Panc1 (cell line): ENCODE measurements at regions of chr9 and their contacts with region 1.

Region 1: GRCh38 chr9:81689343-81690190 is at the start of gene TLE1:
- DNase-seq: peak; percentile 93
- ATAC-seq: peak; percentile 94
- H3K4me3 ChIP-seq: peak within 1 kb of the TSS; percentile 60 to 77
- H3K27ac ChIP-seq: peak within 1 kb of the TSS; percentile 61; the same call in 1 of the 2 replicates
- H3K4me1 ChIP-seq: peaks cover 16% of the 10 kb centered on the region; the same call in 1 of the 2 replicates
- H3K27me3 ChIP-seq: no peaks in the 10 kb centered on the region
- CTCF ChIP-seq: no peak
- total RNA-seq, gene TLE1: 12.9 TPM

Region 2: GRCh38 chr9:81521892-81522291 is 167.7 kb before region 1 on chr9:
- CTCF ChIA-PET with region 1: no interaction called
- POLR2A ChIA-PET with region 1: no interaction called
- in situ Hi-C with region 1: no loop called
- intact Hi-C with region 1: loop called (anchors 5 kb)
- DNase-seq: no peak
- ATAC-seq: no peak
- H3K4me3 ChIP-seq: no peak overlapping the region
- H3K27ac ChIP-seq: no peak overlapping the region
- H3K4me1 ChIP-seq: no peaks in the 10 kb centered on the region
- H3K27me3 ChIP-seq: no peaks in the 10 kb centered on the region
- CTCF ChIP-seq: no peak

Region 3: GRCh38 chr9:81609782-81610739 is 79.5 kb before region 1 on chr9:
- CTCF ChIA-PET with region 1: no interaction called
- POLR2A ChIA-PET with region 1: no interaction called
- in situ Hi-C with region 1: no loop called
- intact Hi-C with region 1: no loop called
- DNase-seq: no peak
- ATAC-seq: no peak
- H3K4me3 ChIP-seq: no peak overlapping the region
- H3K27ac ChIP-seq: no peak overlapping the region
- H3K4me1 ChIP-seq: no peaks in the 10 kb centered on the region
- H3K27me3 ChIP-seq: no peaks in the 10 kb centered on the region
- CTCF ChIP-seq: no peak

Region 4: GRCh38 chr9:81754245-81754644 is 64.7 kb after region 1 on chr9:
- CTCF ChIA-PET with region 1: no interaction called
- POLR2A ChIA-PET with region 1: interaction called, 12 read pairs
- in situ Hi-C with region 1: no loop called
- intact Hi-C with region 1: no loop called
- DNase-seq: no peak
- ATAC-seq: no peak
- H3K4me3 ChIP-seq: no peak overlapping the region
- H3K27ac ChIP-seq: no peak overlapping the region
- H3K4me1 ChIP-seq: no peaks in the 10 kb centered on the region
- H3K27me3 ChIP-seq: no peaks in the 10 kb centered on the region
- CTCF ChIP-seq: no peak

Region 5: GRCh38 chr9:81984928-81985327 is 295.4 kb after region 1 on chr9:
- CTCF ChIA-PET with region 1: no interaction called
- POLR2A ChIA-PET with region 1: no interaction called
- in situ Hi-C with region 1: no loop called
- intact Hi-C with region 1: loop called (anchors 10 kb)
- DNase-seq: no peak
- ATAC-seq: no peak
- H3K4me3 ChIP-seq: no peak overlapping the region
- H3K27ac ChIP-seq: no peak overlapping the region
- H3K4me1 ChIP-seq: no peaks in the 10 kb centered on the region
- H3K27me3 ChIP-seq: no peaks in the 10 kb centered on the region
- CTCF ChIP-seq: no peak